ENCODE measurements at regions of chr2 and their contacts with region 1.

Region 1: GRCh38 chr2:224927646-224928173 is 114.6 kb downstream of the DOCK10 start:
- DNase-seq: peak; percentile 83
- H3K4me3 Mint-ChIP-seq: peak overlapping the region; percentile 46
- H3K27ac Mint-ChIP-seq: peak overlapping the region; percentile 92
- H3K4me1 Mint-ChIP-seq: peaks cover 99% of the 10 kb centered on the region
- H3K27me3 Mint-ChIP-seq: no peaks in the 10 kb centered on the region

Region 2: DNA sequence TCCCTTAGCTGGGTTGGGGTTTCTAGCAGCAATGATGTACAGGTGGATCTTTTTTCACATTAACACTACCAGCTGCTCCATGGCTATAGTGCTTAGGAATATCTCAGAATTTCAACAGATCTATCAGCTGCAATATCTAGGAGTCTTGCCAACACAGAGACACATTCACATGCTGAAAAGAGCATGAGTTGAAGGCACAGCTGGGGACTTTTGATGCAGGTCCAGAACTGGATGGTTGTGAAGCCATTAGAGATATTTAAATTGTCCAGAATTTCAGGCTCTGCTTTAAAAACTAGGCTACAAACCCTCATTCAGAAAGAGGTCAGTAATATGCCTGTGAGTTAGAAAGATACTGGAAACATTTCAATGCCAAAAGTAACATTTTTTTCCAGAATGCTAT is 89.4 kb before region 1 on chr2:
- CTCF ChIA-PET with region 1: no interaction called
- POLR2A ChIA-PET with region 1: no interaction called
- DNase-seq: no peak
- H3K4me3 Mint-ChIP-seq: no peak overlapping the region
- H3K27ac Mint-ChIP-seq: no peak overlapping the region
- H3K4me1 Mint-ChIP-seq: peaks cover 3% of the 10 kb centered on the region
- H3K27me3 Mint-ChIP-seq: no peaks in the 10 kb centered on the region

Region 3: GRCh38 chr2:224850081-224850480 is 77.6 kb before region 1 on chr2:
- CTCF ChIA-PET with region 1: no interaction called
- POLR2A ChIA-PET with region 1: no interaction called
- DNase-seq: no peak
- H3K4me3 Mint-ChIP-seq: no peak overlapping the region
- H3K27ac Mint-ChIP-seq: no peak overlapping the region
- H3K4me1 Mint-ChIP-seq: no peaks in the 10 kb centered on the region
- H3K27me3 Mint-ChIP-seq: no peaks in the 10 kb centered on the region

Region 4: DNA sequence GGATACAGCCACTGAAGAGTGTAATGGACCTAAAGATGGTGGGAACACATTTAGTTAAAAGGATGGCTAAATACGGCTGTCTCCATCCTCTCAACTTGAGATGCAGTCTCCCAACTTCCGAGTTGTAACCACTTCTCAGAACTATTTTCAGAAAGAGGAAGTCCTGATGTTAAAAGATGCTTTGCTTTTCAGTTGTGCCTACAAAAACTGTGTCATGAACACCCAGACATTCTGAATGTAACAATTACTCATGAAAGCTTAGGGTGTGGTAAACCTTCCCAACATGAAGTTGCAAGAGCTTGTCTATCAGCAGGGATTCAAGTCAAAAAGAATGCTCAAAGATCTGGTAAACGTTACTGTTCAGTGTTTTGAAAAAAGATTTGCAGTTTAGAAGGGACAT is 33.4 kb before region 1 on chr2:
- CTCF ChIA-PET with region 1: no interaction called
- POLR2A ChIA-PET with region 1: interaction called, 13 read pairs
- DNase-seq: no peak
- H3K4me3 Mint-ChIP-seq: peak overlapping the region; percentile 58
- H3K27ac Mint-ChIP-seq: peak overlapping the region; percentile 96
- H3K4me1 Mint-ChIP-seq: peaks cover 58% of the 10 kb centered on the region
- H3K27me3 Mint-ChIP-seq: no peaks in the 10 kb centered on the region

Region 5: DNA sequence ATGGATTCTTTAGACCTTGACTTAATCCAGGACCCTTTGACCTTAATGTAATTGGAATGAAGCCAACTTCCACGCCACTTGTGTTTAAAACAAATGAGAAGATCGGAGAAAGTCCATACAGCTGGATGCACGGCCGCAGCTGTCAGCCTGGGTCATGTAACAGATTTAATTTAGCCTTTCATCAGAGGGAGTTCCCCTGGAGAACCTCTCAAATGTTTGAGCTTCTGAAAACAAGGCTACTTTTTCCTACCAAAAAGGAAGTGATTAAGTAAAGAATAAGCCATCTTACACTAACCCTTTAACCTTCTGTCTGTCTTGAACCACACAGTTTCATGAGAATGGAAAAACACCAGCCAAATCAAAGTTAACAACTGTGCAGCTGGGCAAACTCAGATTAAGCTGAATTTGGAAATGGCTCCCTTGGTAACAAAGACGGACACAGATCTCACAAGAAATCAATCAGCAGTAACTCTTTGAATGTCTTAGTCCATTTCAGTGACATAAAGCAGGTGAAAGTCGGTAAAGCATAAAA is 11.0 kb after region 1 on chr2:
- CTCF ChIA-PET with region 1: interaction called, 13 read pairs
- POLR2A ChIA-PET with region 1: interaction called, 546 read pairs
- DNase-seq: no peak
- H3K4me3 Mint-ChIP-seq: peak overlapping the region; percentile 46
- H3K27ac Mint-ChIP-seq: peak overlapping the region; percentile 76
- H3K4me1 Mint-ChIP-seq: peaks cover 80% of the 10 kb centered on the region
- H3K27me3 Mint-ChIP-seq: no peaks in the 10 kb centered on the region

Region 6: GRCh38 chr2:225002039-225002655 is 74.4 kb after region 1 on chr2:
- CTCF ChIA-PET with region 1: interaction called, 12 read pairs
- POLR2A ChIA-PET with region 1: interaction called, 18 read pairs
- DNase-seq: peak; percentile 69
- H3K4me3 Mint-ChIP-seq: no peak overlapping the region
- H3K27ac Mint-ChIP-seq: peak overlapping the region; percentile 44
- H3K4me1 Mint-ChIP-seq: peaks cover 66% of the 10 kb centered on the region
- H3K27me3 Mint-ChIP-seq: no peaks in the 10 kb centered on the region

Region 7: GRCh38 chr2:225041851-225042799 is 114.4 kb after region 1 on chr2 and contains the start of gene DOCK10:
- CTCF ChIA-PET with region 1: no interaction called
- POLR2A ChIA-PET with region 1: interaction called, 47 read pairs
- DNase-seq: peak; percentile 55
- H3K4me3 Mint-ChIP-seq: peak within 1 kb of the TSS; percentile 99
- H3K27ac Mint-ChIP-seq: peak within 1 kb of the TSS; percentile 98
- H3K4me1 Mint-ChIP-seq: peaks cover 49% of the 10 kb centered on the region
- H3K27me3 Mint-ChIP-seq: peaks cover 33% of the 10 kb centered on the region
- total RNA-seq, gene DOCK10: 223 to 239 TPM

Region 8: DNA sequence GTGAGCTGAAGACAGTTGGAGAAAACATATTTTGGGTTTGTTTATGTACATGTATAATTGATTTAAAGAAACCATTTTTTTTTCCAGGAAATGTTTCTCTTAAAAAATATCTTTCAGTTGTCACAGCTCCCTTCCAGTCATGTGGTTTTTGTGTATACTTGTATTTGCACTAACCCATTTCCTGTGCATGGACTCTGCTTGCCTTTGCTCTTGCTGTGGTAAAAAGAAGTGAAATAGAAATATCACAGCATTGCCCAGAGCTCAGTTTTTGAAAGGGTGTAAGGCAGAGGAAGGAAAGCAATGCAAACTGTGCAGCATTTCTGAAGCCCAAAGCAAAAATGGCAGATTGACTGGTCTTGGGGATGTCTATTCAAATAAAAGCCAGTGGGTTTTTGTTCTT is 125.0 kb after region 1 on chr2:
- CTCF ChIA-PET with region 1: no interaction called
- POLR2A ChIA-PET with region 1: interaction called, 15 read pairs
- DNase-seq: peak; percentile 50
- H3K4me3 Mint-ChIP-seq: peak overlapping the region; percentile 15
- H3K27ac Mint-ChIP-seq: peak overlapping the region; percentile 84
- H3K4me1 Mint-ChIP-seq: peaks cover 65% of the 10 kb centered on the region
- H3K27me3 Mint-ChIP-seq: peaks cover 15% of the 10 kb centered on the region

Measured in activated CD4-positive, alpha-beta memory T cell treated with anti-CD3 and anti-CD28 coated beads, Interleukin-2, amount 10 ng/mL, durations not matched to agents 7 days and 5 days (primary cell).